ENCODE measurements at regions of chr14 and their contacts with region 1.

Region 1: DNA sequence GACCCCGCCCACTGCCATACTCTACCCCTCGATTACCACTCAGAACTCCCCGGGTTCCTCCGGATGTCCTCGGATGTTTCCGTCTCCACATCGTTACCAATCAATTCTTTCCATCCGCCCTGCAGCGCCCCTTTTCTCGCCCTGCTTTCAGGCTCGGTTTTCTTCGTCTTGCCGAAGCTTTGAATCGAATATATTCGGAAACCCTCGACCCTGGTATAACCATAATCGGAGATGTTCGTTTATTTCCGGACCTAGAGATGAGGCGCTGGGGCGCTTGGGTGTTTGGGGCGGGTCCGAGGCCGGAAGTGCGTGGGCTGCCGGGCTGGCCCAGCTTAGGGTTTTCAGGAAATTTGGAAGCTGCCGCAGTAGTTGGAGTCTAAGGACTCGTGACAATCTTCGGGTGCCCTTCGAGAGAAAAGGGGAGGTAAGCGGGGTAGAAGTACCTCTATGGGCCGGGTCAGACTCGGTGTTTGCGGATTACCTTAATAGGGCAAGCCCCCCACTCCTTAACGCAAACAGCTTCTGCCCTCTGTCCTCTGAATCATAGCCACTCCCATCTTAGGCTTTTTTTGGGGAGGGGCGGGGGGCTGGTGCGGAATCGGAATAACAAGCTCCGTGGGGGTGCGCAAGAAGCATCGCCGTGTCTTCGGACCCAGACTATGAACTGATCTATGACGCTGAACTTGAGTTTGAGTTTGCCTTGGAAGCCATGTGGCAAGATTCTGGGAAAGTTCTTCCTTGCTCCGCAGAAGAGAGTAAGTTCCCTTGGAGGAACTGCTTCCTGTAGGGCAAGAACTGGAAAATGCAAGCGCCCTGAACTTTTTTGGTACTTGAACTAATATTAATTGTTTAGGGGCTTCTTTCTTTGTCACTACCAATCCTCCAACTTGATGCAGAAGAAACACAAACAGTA is at the start of gene C14orf119:
- DNase-seq: peak; percentile 86
- ATAC-seq: peak; percentile 93
- H3K4me3 Mint-ChIP-seq: no peak within 1 kb of the TSS
- H3K27ac Mint-ChIP-seq: no peak within 1 kb of the TSS
- H3K4me1 Mint-ChIP-seq: peaks cover 32% of the 10 kb centered on the region
- H3K27me3 Mint-ChIP-seq: no peaks in the 10 kb centered on the region
- total RNA-seq, gene C14orf119: 46.6 to 47.4 TPM

Region 2: GRCh38 chr14:22872033-22872832 is 223.2 kb before region 1 on chr14:
- POLR2A ChIA-PET with region 1: no interaction called
- DNase-seq: peak; percentile 79
- ATAC-seq: peak; percentile 28
- H3K4me3 Mint-ChIP-seq: peak overlapping the region; percentile 88
- H3K27ac Mint-ChIP-seq: peak overlapping the region; percentile 97
- H3K4me1 Mint-ChIP-seq: peaks cover 23% of the 10 kb centered on the region
- H3K27me3 Mint-ChIP-seq: no peaks in the 10 kb centered on the region

Region 3: DNA sequence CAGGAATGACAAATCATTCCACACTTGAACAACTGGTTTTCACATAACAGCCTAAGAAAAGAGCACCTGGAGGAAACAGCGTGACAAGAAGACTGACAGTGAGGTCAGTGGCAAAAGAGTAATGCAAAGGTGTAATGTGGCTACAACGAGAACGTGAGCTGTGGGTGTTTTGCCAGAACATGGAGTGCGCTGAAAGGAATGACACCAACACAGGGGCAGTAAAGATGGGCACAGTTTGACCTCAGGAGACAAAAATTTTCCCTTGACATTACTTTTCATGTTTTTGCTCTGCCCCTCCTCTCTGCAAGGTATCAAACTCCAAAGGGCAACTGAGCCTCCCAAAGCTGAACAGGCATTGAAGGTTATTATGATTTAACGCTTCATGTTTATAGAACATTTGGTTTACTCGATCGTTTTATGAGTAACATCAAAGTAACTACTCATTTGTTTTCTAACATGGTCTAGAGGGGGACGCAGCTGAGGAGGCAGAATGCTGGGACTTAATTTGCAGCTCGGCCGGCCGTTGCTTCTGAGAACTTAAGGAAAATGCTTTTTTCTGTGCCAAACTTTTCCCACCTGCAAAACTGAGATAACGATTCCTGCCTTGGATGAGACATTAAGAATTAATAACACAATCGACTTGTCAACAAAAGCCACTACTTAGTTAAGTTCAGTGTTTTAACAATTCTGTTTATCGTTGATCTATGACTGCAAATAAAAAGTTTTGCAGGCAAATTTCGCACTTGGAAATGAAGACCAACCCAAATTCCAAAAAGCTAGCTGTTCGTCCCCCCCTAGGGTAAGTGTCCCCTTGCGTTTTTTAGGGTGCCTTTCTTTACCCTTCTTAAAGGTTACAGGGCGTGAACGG is 139.5 kb before region 1 on chr14:
- POLR2A ChIA-PET with region 1: interaction called, 11 read pairs
- DNase-seq: no peak
- ATAC-seq: no peak
- H3K4me3 Mint-ChIP-seq: peak overlapping the region; percentile 89
- H3K27ac Mint-ChIP-seq: peak overlapping the region; percentile 90
- H3K4me1 Mint-ChIP-seq: peaks cover 17% of the 10 kb centered on the region
- H3K27me3 Mint-ChIP-seq: peaks cover 3% of the 10 kb centered on the region

Region 4: DNA sequence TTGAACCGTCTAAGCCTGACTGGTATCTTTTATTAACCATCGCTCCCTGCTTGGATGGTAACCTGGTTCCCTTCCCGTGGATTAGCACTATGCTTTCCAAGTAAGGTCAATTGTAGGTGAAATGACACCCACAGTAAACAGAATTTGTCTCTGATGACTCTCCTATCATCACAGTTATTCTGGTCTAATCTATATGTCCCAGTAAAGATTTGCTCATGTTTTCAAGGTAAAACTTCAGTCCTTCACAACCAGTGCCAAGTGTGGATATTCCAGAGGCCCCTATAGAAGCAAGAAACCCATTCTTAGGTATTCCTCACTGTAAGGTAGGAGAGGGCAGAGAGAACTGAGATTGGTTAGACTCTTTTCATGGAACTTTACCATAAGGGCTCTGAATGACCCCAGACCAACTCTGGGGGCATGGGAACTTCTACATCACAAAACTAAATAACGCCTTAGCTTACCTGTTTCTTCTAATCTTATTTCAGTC is 128.6 kb before region 1 on chr14:
- POLR2A ChIA-PET with region 1: no interaction called
- DNase-seq: no peak
- ATAC-seq: no peak
- H3K4me3 Mint-ChIP-seq: no peak overlapping the region
- H3K27ac Mint-ChIP-seq: no peak overlapping the region
- H3K4me1 Mint-ChIP-seq: no peaks in the 10 kb centered on the region
- H3K27me3 Mint-ChIP-seq: peaks cover 7% of the 10 kb centered on the region

Region 5: GRCh38 chr14:23052182-23052623 is 43.2 kb before region 1 on chr14:
- POLR2A ChIA-PET with region 1: no interaction called
- DNase-seq: no peak
- ATAC-seq: no peak
- H3K4me3 Mint-ChIP-seq: no peak overlapping the region
- H3K27ac Mint-ChIP-seq: no peak overlapping the region
- H3K4me1 Mint-ChIP-seq: peaks cover 11% of the 10 kb centered on the region
- H3K27me3 Mint-ChIP-seq: peaks cover 8% of the 10 kb centered on the region

Region 6: GRCh38 chr14:23068476-23069412 is 26.7 kb before region 1 on chr14:
- POLR2A ChIA-PET with region 1: interaction called, 29 read pairs
- DNase-seq: no peak
- ATAC-seq: peak; percentile 71
- H3K4me3 Mint-ChIP-seq: peak overlapping the region; percentile 41
- H3K27ac Mint-ChIP-seq: peak overlapping the region; percentile 31
- H3K4me1 Mint-ChIP-seq: peaks cover 13% of the 10 kb centered on the region
- H3K27me3 Mint-ChIP-seq: no peaks in the 10 kb centered on the region

Region 7: GRCh38 chr14:23120541-23121251 is 25.2 kb after region 1 on chr14:
- POLR2A ChIA-PET with region 1: interaction called, 42 read pairs
- DNase-seq: peak; percentile 82
- ATAC-seq: peak; percentile 53
- H3K4me3 Mint-ChIP-seq: peak overlapping the region; percentile 65
- H3K27ac Mint-ChIP-seq: peak overlapping the region; percentile 96
- H3K4me1 Mint-ChIP-seq: peaks cover 28% of the 10 kb centered on the region
- H3K27me3 Mint-ChIP-seq: no peaks in the 10 kb centered on the region

Region 8: DNA sequence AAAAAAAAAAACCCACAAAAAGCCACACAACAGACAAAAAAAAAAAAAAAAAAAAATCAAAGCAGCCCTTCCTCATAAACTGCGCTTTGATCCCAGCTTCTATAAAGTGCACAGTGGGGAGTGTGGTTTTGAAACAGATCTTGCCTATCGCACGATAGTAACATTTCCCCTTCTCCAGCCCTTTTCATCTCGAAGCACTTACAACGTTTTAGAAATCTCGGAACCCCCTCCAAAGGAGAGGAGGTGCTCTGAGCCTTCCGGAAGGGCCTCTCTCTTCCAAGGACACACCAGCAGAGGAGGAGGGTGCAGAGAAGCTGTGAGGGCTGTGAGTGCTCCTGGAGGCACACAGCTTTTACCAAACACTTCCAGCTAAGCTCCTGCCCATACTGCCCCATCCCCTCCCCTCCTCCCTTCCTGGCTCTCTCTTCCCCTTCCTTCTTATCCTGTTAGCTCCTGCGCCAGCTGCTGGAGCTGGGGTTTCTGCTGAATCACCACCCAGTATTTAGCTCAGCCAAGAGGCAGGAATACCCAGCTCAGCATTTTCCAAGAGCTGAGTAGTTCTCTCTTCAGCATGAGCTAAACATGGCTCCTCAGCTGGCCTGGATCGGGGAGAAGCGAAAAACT is 59.6 kb after region 1 on chr14:
- POLR2A ChIA-PET with region 1: no interaction called
- DNase-seq: no peak
- ATAC-seq: no peak
- H3K4me3 Mint-ChIP-seq: no peak overlapping the region
- H3K27ac Mint-ChIP-seq: no peak overlapping the region
- H3K4me1 Mint-ChIP-seq: peaks cover 9% of the 10 kb centered on the region
- H3K27me3 Mint-ChIP-seq: peaks cover 11% of the 10 kb centered on the region

Region 9: GRCh38 chr14:23301288-23301968 is 206.0 kb after region 1 on chr14:
- POLR2A ChIA-PET with region 1: interaction called, 11 read pairs
- DNase-seq: peak; percentile 100
- ATAC-seq: peak; percentile 83
- H3K4me3 Mint-ChIP-seq: peak overlapping the region; percentile 96
- H3K27ac Mint-ChIP-seq: peak overlapping the region; percentile 97
- H3K4me1 Mint-ChIP-seq: peaks cover 17% of the 10 kb centered on the region
- H3K27me3 Mint-ChIP-seq: peaks cover 7% of the 10 kb centered on the region

Measured in activated naive CD8-positive, alpha-beta T cell treated with anti-CD3 and anti-CD28 coated beads, Interleukin-2, amount 10 ng/mL, durations not matched to agents 7 days and 5 days (primary cell).